Esophagus muscularis mucosa (tissue), 4 donors: ENCODE measurements at regions of chrX and their contacts with region 1.

Region 1: GRCh38 chrX:129982274-129983251 is at the start of gene BCORL1:
- DNase-seq: peak; percentile 97
- H3K4me3 ChIP-seq: no peak within 1 kb of the TSS
- H3K27ac ChIP-seq: peak within 1 kb of the TSS in 2 of 4 donors; percentile 84 to 85
- H3K4me1 ChIP-seq: peaks cover 0 to 30% (median 21%) of the 10 kb centered on the region in 4 donors
- H3K27me3 ChIP-seq: no peaks in the 10 kb centered on the region
- CTCF ChIP-seq: no peak
- EP300 ChIP-seq: no peak
- POLR2A ChIP-seq: peak; percentile 50
- total RNA-seq, gene BCORL1: 3.8 to 13.8 (median 10.5) TPM

Region 2: DNA sequence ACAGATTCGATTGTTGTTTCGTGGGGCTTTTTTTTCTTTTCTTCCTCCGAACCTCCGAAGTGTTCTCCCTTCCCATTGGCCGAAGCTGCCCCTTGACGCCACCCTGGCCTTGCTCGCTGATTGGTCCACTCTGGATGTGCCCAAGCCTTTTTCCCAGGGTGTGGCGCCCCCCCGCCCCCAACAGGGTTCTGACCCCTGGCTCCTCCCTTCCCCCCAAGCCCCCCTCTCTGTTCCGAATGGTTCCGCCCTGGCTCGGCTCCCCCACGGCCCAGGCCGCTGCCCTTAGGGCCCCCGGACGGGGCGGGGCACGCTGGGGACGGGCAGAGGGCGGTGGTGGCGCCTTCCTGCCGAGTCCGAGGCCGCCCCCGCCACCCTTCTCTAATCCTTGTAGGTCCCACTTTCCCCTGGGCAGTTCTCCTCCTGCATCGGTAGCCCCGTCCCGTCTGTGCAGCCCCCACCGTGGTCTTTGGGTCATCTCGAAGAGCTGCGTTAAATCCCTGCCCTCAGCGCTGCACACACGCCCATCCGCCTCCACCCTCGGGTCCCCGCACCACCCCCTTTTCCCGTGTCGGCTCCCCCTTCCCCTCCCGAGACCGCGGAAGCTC is 51.0 kb before region 1 on chrX:
- intact Hi-C with region 1: loop called (anchors 5 kb)
- DNase-seq: peak; percentile 97
- H3K4me3 ChIP-seq: peak overlapping the region; percentile 62 to 71 (median 62)
- H3K27ac ChIP-seq: peak overlapping the region; percentile 85 to 90 (median 86)
- H3K4me1 ChIP-seq: peaks cover 0 to 12% (median 3%) of the 10 kb centered on the region in 4 donors
- H3K27me3 ChIP-seq: no peaks in the 10 kb centered on the region
- CTCF ChIP-seq: no peak
- EP300 ChIP-seq: no peak
- POLR2A ChIP-seq: no peak